Activated naive CD4-positive, alpha-beta T cell treated with anti-CD3 and anti-CD28 coated beads for 36 hours (primary cell): ENCODE measurements at regions of chr10 and their contacts with region 1.

Region 1: DNA sequence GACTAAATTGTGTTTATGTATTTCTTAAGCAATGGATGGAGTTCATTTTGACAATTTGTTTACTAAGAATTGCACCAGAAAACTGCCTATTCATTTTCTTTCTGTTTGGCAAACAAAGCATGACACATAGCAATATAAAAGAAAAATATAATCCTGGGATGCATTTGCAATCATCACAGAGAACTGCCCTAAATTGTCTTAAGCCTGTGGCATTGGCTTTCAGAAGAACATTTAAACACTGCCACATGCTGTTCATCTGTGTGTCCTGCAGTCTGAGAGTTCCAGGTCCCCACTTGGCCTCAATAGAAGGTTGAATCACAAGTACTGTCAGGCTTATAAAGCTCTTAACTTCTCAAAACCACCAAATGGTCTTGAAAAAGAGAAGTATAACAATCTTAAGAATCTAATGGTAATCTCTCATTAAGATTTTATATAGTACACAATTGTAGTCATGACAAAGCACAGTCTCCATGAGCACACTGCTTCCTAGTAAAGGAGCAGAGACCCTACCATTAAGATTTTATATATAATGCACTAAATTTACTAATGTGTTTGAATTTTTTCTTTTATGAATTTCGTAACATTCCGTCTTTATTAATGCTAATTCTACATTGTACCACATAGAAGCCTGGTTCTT is 29.9 kb downstream of the RNLS start:
- DNase-seq: peak; percentile 54
- H3K4me3 Mint-ChIP-seq: no peak overlapping the region
- H3K27ac Mint-ChIP-seq: no peak overlapping the region
- H3K4me1 Mint-ChIP-seq: no peaks in the 10 kb centered on the region
- H3K27me3 Mint-ChIP-seq: no peaks in the 10 kb centered on the region

Region 2: DNA sequence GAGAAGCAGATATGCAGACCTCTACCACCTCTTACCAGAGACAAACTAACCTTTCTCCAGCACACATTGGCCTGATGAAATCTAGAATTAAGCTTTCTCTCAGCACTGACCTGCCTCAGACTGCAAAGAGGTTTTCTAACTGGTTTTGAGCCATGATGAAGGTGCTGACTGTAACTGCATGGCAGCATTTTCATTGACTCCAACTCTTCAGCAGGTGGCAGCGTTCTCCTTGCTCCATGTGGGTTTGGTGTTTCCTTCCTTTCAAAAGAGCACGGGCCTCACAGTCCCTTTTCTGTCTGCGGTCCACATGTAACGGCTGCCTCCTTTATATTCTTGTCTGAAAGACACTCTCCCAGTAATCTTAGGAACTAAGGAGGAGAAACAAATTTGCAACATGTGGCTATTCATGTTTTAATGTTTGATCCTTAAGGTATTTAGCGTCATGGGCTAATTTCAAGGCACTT is 702.5 kb before region 1 on chr10:
- CTCF ChIA-PET with region 1: interaction called, 8 read pairs
- intact Hi-C with region 1: loop called (anchors 1 kb)
- DNase-seq: peak; percentile 71
- H3K4me3 Mint-ChIP-seq: no peak overlapping the region
- H3K27ac Mint-ChIP-seq: no peak overlapping the region
- H3K4me1 Mint-ChIP-seq: peaks cover 4% of the 10 kb centered on the region
- H3K27me3 Mint-ChIP-seq: no peaks in the 10 kb centered on the region

Region 3: DNA sequence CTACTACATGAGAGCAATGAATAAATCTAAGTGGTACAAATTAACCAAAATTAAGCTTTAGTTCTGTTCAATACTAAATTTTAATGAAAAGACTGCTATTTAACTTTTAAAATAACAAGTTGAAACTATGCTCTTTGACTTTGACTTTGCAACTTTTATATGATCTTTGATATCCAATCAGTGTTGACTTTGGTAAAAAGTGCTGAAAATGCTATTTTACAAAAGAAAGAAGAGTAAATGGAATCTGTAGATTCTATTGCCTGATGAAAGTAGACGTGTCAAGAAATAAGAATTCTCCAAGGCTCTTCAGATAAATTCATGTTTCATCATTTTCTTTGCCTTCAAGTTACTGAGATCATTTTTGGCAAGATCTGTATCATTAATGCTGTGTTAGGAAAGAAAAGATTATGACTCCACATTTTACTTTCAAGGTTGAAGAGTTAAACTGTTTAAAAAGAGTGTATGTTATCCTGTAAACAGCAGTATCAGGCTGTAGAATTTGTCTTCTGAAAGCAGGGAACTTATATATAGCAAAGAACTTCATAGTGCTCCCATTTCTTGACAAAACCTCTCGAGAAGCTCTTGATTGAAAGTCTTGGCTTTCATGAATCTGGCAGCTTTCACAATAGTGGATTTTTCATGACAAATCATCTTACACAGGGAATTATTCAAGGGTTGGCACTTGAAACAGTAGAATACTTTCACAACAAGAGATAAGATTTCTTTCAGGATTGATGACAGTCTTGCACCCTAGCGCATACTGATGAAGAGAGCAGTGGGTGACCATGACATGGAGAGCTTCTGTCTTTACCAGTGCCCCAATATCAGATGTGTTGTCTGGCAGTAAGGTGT is 617.7 kb before region 1 on chr10:
- CTCF ChIA-PET with region 1: no interaction called
- intact Hi-C with region 1: no loop called
- DNase-seq: no peak
- H3K4me3 Mint-ChIP-seq: no peak overlapping the region
- H3K27ac Mint-ChIP-seq: no peak overlapping the region
- H3K4me1 Mint-ChIP-seq: peaks cover 18% of the 10 kb centered on the region
- H3K27me3 Mint-ChIP-seq: no peaks in the 10 kb centered on the region

Region 4: GRCh38 chr10:88401671-88402347 is 151.4 kb before region 1 on chr10:
- CTCF ChIA-PET with region 1: no interaction called
- intact Hi-C with region 1: loop called (anchors 1 kb)
- DNase-seq: no peak
- H3K4me3 Mint-ChIP-seq: no peak overlapping the region
- H3K27ac Mint-ChIP-seq: no peak overlapping the region
- H3K4me1 Mint-ChIP-seq: peaks cover 4% of the 10 kb centered on the region
- H3K27me3 Mint-ChIP-seq: no peaks in the 10 kb centered on the region